IMR-90 (cell line): ENCODE measurements at regions of chr14 and their contacts with region 1.

Region 1: GRCh38 chr14:35004839-35005238 is 22.0 kb downstream of the SRP54 start:
- DNase-seq: no peak
- ATAC-seq: no peak
- H3K4me3 ChIP-seq: no peak overlapping the region
- H3K27ac ChIP-seq: no peak overlapping the region
- H3K4me1 ChIP-seq: no peaks in the 10 kb centered on the region
- H3K27me3 ChIP-seq: no peaks in the 10 kb centered on the region
- CTCF ChIP-seq: no peak
- POLR2A ChIP-seq: no peak
- RAD21 ChIP-seq: no peak

Region 2: DNA sequence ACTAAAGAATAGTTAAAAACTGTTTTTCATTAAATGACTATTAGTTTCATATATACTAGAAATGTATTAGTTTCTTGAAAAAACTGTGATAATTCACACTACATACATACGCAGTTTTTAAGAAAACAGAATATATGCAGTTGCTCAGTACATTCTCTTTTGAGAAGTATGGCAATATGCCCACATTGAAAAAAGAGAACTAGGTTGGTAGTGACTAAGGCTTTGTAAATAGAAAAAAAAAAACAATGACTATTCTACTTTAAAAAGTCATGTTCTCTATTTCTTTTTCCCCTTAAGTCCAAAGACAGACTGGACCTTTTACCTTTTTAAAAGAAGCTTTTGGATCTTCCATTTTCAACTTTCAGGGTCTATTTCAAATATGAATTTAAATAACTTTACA is 399.8 kb before region 1 on chr14:
- CTCF ChIA-PET with region 1: no interaction called
- POLR2A ChIA-PET with region 1: no interaction called
- dilution Hi-C with region 1: no loop called
- in situ Hi-C with region 1: loop called (anchors 10 kb)
- intact Hi-C with region 1: no loop called
- DNase-seq: peak; percentile 51
- ATAC-seq: no peak
- H3K4me3 ChIP-seq: no peak overlapping the region
- H3K27ac ChIP-seq: no peak overlapping the region
- H3K4me1 ChIP-seq: no peaks in the 10 kb centered on the region
- H3K27me3 ChIP-seq: no peaks in the 10 kb centered on the region
- CTCF ChIP-seq: no peak
- POLR2A ChIP-seq: no peak
- RAD21 ChIP-seq: no peak

Region 3: DNA sequence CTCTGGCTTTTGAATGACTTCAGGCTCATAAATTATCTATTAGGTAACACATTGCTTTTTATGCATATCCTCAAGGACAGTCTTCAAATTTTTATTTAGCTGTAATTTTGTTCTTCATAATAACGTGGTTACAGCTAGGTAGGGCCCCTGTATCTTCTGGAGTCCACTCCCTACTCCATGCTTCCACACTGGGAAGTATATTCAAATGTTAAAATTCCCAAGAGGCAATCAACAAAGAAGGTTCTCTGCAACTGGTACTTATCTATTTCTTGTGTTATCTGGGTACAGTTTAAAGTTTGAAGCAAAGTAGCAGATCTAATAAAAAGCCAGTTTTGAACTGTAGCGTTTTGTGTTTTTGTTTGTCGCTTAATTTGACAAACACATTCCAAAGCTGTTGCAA is 109.6 kb before region 1 on chr14:
- CTCF ChIA-PET with region 1: no interaction called
- POLR2A ChIA-PET with region 1: no interaction called
- dilution Hi-C with region 1: no loop called
- in situ Hi-C with region 1: no loop called
- intact Hi-C with region 1: no loop called
- DNase-seq: no peak
- ATAC-seq: no peak
- H3K4me3 ChIP-seq: no peak overlapping the region
- H3K27ac ChIP-seq: no peak overlapping the region
- H3K4me1 ChIP-seq: no peaks in the 10 kb centered on the region
- H3K27me3 ChIP-seq: no peaks in the 10 kb centered on the region
- CTCF ChIP-seq: no peak
- POLR2A ChIP-seq: no peak
- RAD21 ChIP-seq: no peak

Region 4: DNA sequence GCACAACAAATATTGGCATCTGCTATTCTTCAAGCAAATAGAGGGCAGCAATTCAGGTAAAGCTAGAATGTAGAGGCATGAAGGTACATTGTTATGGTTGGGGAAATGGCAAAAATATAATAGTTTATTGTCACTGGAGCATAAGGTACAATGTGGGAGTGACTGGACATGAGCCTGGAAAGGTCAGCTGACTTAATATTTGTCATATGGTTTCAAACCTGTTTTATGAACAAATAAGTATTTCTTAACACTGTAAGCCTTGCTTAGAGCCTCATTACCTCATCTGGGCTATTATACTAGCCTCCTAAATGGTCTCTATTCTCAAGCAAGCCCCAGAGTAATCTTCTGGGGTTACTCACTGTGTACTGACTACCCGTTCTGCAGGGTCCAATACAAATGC is 74.9 kb after region 1 on chr14:
- CTCF ChIA-PET with region 1: no interaction called
- POLR2A ChIA-PET with region 1: no interaction called
- dilution Hi-C with region 1: no loop called
- in situ Hi-C with region 1: no loop called
- intact Hi-C with region 1: loop called (anchors 5 kb)
- DNase-seq: no peak
- ATAC-seq: no peak
- H3K4me3 ChIP-seq: no peak overlapping the region
- H3K27ac ChIP-seq: no peak overlapping the region
- H3K4me1 ChIP-seq: no peaks in the 10 kb centered on the region
- H3K27me3 ChIP-seq: no peaks in the 10 kb centered on the region
- CTCF ChIP-seq: no peak
- POLR2A ChIP-seq: no peak
- RAD21 ChIP-seq: no peak

Region 5: DNA sequence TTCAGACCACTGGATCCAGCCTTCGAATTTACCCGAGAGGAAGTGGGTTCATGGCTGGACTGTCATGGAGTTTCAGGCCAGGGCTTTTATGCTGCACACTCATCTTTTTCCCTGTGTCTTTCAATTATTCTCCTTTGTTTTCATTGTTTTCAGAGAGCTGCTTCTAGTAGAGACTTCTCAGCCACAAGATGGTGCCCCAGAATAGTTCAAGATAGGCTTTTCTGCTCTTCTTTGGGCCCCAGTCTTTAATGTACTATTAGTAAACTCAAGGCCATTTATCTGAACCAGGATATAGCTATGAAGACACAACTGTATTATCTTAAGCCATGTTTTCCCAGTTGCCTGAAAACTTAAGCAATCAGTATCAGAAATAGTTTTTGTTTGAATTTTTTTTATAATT is 256.9 kb after region 1 on chr14:
- CTCF ChIA-PET with region 1: no interaction called
- POLR2A ChIA-PET with region 1: no interaction called
- dilution Hi-C with region 1: no loop called
- in situ Hi-C with region 1: no loop called
- intact Hi-C with region 1: no loop called
- DNase-seq: peak; percentile 7
- ATAC-seq: no peak
- H3K4me3 ChIP-seq: no peak overlapping the region
- H3K27ac ChIP-seq: no peak overlapping the region
- H3K4me1 ChIP-seq: no peaks in the 10 kb centered on the region; the same call in 1 of the 2 replicates
- H3K27me3 ChIP-seq: no peaks in the 10 kb centered on the region
- CTCF ChIP-seq: no peak
- POLR2A ChIP-seq: no peak
- RAD21 ChIP-seq: no peak